Activated CD8-positive, alpha-beta T cell treated with anti-CD3 and anti-CD28 coated beads, Interleukin-2, amount 10 ng/mL, durations not matched to agents 7 days and 5 days (primary cell): ENCODE measurements at regions of chr22 and their contacts with region 1.

Region 1: DNA sequence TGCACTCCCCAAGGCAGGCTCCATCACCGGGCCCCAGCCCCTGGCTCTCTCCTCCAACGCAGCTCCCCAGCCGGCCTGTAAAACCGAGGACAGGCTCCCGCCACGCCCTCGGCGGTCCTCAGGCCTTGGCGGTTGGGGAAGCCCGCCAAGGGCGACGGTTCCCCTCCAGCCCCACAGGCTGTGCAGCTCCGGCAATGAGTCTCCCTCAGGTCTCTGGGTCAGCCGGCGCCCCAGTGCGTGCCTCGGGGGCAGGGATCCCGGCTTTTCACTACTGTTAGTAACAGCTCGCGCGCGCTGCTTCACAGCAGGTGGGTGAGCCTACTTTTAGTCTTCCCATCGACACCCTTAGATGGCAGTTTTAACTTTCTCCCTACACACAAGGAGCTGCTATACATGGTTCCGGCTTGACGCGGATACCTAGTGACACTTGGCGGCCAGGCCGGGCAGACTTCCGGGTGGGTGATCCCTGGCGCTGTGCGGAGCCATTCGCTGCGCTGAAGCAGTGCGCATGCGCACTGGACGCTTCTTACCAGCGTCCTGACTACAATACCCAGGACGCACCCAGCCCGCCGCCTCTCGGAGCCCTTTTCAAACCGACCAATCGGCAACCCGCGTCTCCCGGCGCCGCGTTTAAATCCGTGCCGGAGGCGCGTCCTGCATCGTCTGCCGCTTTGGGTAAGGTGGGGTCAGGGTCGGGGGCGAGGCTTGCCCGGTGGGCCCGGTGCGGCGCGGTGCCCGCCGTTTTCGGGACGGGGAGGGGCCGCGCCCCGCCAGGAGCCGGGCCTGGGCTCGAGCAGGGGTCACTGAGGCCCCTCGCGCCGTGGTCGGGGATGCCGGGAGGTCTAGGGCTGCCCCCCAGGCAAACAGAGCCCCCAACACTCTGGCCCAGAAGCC is at the start of gene GTSE1:
- DNase-seq: peak; percentile 99
- ATAC-seq: peak; percentile 99
- H3K4me3 Mint-ChIP-seq: peak within 1 kb of the TSS; percentile 89
- H3K27ac Mint-ChIP-seq: peak within 1 kb of the TSS; percentile 97
- H3K4me1 Mint-ChIP-seq: peaks cover 67% of the 10 kb centered on the region
- H3K27me3 Mint-ChIP-seq: no peaks in the 10 kb centered on the region
- total RNA-seq, gene GTSE1: 111 to 114 TPM

Region 2: DNA sequence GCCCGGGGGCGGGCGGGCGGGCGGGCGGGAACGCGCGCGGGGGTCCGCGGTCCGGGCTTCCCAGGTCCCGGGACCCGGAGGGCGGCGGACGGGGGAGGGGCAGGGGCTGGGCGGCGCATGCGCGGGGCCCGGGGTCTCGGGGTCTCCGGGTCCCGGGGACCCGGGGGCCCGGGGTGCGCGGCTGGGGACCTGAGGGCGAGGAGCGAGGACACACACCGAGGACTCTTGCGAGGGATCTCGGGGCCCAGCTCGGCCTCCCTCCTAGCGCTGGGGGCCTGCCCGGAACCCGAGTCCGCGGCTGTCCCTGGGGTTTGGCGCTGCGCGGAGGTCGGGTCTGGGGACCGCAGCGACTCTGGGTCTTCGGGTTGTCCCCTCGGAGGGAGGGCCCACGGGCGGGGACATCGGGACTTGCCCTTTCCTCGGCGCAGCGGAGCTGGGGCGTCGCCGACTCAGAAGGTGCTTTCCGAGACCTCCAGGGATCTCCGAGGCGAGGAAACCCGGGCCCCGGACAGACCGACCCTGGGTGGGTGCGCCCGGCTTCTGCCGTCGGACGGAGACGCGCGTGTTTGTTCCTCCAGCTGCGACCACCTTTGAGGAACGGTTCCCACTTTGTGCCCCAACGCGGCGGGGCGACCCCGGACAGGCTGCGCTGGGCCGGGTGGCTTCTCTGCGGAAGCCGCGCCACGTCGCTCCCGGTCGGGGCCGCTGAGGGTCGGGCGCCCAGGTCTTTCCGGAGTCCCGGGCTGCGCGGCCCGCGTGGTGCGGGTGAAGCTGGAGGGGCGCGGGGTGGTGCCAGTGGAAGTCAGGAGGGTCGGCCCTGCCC is 145.6 kb before region 1 on chr22:
- CTCF ChIA-PET with region 1: interaction called, 5 read pairs
- POLR2A ChIA-PET with region 1: interaction called, 10 read pairs
- DNase-seq: peak; percentile 63
- ATAC-seq: peak; percentile 45
- H3K4me3 Mint-ChIP-seq: peak overlapping the region; percentile 79
- H3K27ac Mint-ChIP-seq: peak overlapping the region; percentile 70
- H3K4me1 Mint-ChIP-seq: peaks cover 22% of the 10 kb centered on the region
- H3K27me3 Mint-ChIP-seq: peaks cover 23% of the 10 kb centered on the region

Region 3: DNA sequence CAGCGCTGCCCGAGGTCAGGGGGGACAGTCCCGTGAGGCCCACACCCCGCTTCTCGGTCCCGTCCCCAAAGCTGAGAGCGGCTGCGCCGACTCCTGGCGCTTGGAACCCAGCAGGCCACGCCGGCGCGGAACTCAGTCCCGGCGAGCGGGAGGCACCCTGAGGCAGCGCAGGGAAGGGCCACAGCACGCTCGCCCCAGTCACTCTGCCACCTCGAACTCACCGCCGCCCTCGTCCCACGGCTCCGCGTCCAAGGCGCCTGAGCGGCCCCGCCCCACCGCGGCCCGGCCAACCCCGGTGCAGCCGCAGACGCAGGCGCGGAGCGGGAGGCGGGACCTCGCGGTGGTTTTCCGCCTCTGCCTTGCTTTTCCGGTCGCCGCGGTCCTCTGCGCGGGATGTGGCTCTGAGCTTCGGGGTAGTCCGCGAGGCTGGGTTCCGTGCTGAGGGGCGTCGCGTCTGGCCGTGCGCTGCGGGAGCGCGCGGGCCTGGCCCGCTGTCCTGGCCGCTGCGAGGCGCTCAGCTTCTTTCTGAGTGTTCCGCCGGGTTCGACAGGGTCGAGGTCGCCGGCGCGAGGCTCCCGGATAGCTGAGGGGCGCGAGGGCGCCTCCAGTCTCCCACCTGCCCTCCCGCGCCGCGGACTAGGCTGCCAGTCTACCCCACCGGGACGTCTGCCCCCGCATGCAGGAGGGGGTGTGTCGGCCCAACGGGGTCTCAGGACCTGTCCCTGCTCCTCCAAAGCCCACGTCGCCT is 46.3 kb before region 1 on chr22 and contains the start of gene CDPF1:
- CTCF ChIA-PET with region 1: interaction called, 4 read pairs
- POLR2A ChIA-PET with region 1: interaction called, 10 read pairs
- DNase-seq: peak; percentile 90
- ATAC-seq: peak; percentile 96
- H3K4me3 Mint-ChIP-seq: peak within 1 kb of the TSS; percentile 77
- H3K27ac Mint-ChIP-seq: peak within 1 kb of the TSS; percentile 84
- H3K4me1 Mint-ChIP-seq: peaks cover 35% of the 10 kb centered on the region
- H3K27me3 Mint-ChIP-seq: no peaks in the 10 kb centered on the region
- total RNA-seq, gene CDPF1: 11.6 to 11.7 TPM